B cell (primary cell): ENCODE measurements at regions of chr3 and their contacts with region 1.

Region 1: GRCh38 chr3:172461530-172462138 is 13.4 kb upstream of the GHSR start:
- DNase-seq: peak; percentile 46
- ATAC-seq: no peak
- H3K4me3 ChIP-seq: no peak overlapping the region
- H3K4me3 Mint-ChIP-seq: no peak overlapping the region
- H3K27ac ChIP-seq: no peak overlapping the region
- H3K27ac Mint-ChIP-seq: no peak overlapping the region
- H3K4me1 ChIP-seq: no peaks in the 10 kb centered on the region
- H3K4me1 Mint-ChIP-seq: no peaks in the 10 kb centered on the region
- H3K27me3 ChIP-seq: peaks cover 0 to 5% (median 0%) of the 10 kb centered on the region in 4 experiments
- H3K27me3 Mint-ChIP-seq: peaks cover 12% of the 10 kb centered on the region
- CTCF ChIP-seq: peak; percentile 100

Region 2: GRCh38 chr3:172397716-172398405 is 63.8 kb before region 1 on chr3:
- CTCF ChIA-PET with region 1: no interaction called
- POLR2A ChIA-PET with region 1: no interaction called
- intact Hi-C with region 1: no loop called
- DNase-seq: no peak
- ATAC-seq: no peak
- H3K4me3 ChIP-seq: no peak overlapping the region
- H3K4me3 Mint-ChIP-seq: no peak overlapping the region
- H3K27ac ChIP-seq: no peak overlapping the region
- H3K27ac Mint-ChIP-seq: no peak overlapping the region
- H3K4me1 ChIP-seq: no peaks in the 10 kb centered on the region
- H3K4me1 Mint-ChIP-seq: no peaks in the 10 kb centered on the region
- H3K27me3 ChIP-seq: no peaks in the 10 kb centered on the region
- H3K27me3 Mint-ChIP-seq: peaks cover 4% of the 10 kb centered on the region
- CTCF ChIP-seq: no peak

Region 3: GRCh38 chr3:172449466-172450149 is 12.0 kb before region 1 on chr3:
- CTCF ChIA-PET with region 1: interaction called, 18 read pairs
- POLR2A ChIA-PET with region 1: no interaction called
- intact Hi-C with region 1: no loop called
- DNase-seq: no peak
- ATAC-seq: no peak
- H3K4me3 ChIP-seq: no peak overlapping the region
- H3K4me3 Mint-ChIP-seq: no peak overlapping the region
- H3K27ac ChIP-seq: no peak overlapping the region
- H3K27ac Mint-ChIP-seq: no peak overlapping the region
- H3K4me1 ChIP-seq: peaks cover 7 to 28% of the 10 kb centered on the region in 2 donors
- H3K4me1 Mint-ChIP-seq: peaks cover 20% of the 10 kb centered on the region
- H3K27me3 ChIP-seq: peaks cover 0 to 41% (median 31%) of the 10 kb centered on the region in 4 experiments
- H3K27me3 Mint-ChIP-seq: peaks cover 58% of the 10 kb centered on the region
- CTCF ChIP-seq: no peak

Region 4: DNA sequence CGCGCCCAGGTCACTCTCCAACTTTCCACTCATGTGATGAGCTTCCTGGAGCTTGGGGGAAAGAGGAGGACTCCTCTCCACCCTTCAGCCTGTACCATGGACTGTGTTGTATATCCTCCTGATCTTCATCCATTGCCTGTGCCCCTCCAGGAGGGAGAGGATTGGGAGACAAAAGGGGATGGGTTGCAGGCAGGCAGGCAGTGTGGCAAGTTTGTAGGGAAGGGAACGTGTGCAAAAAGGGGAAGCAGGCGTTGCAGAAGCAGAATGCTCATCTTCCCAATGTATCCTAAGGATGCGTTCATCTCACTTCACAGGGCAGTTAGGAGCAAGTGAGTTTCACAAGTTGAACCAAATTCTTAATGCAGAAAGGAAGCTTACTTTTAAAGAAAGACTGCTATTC is 14.7 kb after region 1 on chr3:
- CTCF ChIA-PET with region 1: interaction called, 15 read pairs
- POLR2A ChIA-PET with region 1: no interaction called
- intact Hi-C with region 1: loop called (anchors 1 kb)
- DNase-seq: no peak
- ATAC-seq: no peak
- H3K4me3 ChIP-seq: no peak overlapping the region
- H3K4me3 Mint-ChIP-seq: peak overlapping the region; percentile 70
- H3K27ac ChIP-seq: no peak overlapping the region
- H3K27ac Mint-ChIP-seq: no peak overlapping the region
- H3K4me1 ChIP-seq: no peaks in the 10 kb centered on the region
- H3K4me1 Mint-ChIP-seq: peaks cover 9% of the 10 kb centered on the region
- H3K27me3 ChIP-seq: no peaks in the 10 kb centered on the region
- H3K27me3 Mint-ChIP-seq: no peaks in the 10 kb centered on the region
- CTCF ChIP-seq: no peak

Region 5: DNA sequence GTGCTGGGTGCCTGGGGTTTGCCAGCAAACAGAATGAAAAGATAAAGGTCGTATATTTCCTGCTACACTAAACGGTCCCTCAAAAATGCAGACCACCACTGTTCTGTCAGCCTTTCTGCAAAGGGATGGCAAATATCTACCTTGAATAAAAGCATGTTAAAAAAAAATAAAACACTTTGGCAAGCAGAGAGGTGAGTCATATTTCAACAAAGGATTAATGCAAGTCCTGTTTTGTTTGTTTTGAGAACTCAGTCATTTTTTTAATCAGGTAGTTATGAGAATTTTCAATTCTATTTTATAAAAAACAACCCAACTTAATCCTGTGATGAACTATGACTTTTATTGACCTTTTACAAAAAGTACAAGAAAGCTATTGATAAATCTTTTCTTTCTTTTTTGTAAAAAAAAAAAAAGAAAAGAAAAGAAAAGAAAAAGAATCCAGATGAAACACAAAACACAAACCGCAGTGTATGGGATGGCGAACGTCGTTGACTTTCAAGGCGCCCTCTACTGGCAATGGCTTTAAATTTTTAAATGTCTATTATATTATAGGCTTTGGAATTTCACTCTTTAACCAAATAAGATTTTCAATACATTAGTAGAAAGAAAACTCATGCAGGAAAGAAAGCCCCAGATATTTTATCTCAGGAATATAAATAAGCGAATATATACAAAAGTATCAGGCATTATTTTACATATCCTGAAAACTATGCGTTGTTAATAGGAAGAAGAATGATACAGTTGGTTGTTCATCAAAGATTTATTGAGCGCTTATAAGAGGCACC is 161.5 kb after region 1 on chr3:
- CTCF ChIA-PET with region 1: interaction called, 9 read pairs
- POLR2A ChIA-PET with region 1: no interaction called
- intact Hi-C with region 1: loop called (anchors 1 kb)
- DNase-seq: peak; percentile 37
- ATAC-seq: no peak
- H3K4me3 ChIP-seq: no peak overlapping the region
- H3K4me3 Mint-ChIP-seq: no peak overlapping the region
- H3K27ac ChIP-seq: no peak overlapping the region
- H3K27ac Mint-ChIP-seq: no peak overlapping the region
- H3K4me1 ChIP-seq: no peaks in the 10 kb centered on the region
- H3K4me1 Mint-ChIP-seq: peaks cover 1% of the 10 kb centered on the region
- H3K27me3 ChIP-seq: no peaks in the 10 kb centered on the region
- H3K27me3 Mint-ChIP-seq: no peaks in the 10 kb centered on the region
- CTCF ChIP-seq: peak; percentile 83

Region 6: GRCh38 chr3:172698631-172699030 is 237.0 kb after region 1 on chr3:
- CTCF ChIA-PET with region 1: no interaction called
- POLR2A ChIA-PET with region 1: no interaction called
- intact Hi-C with region 1: no loop called
- DNase-seq: no peak
- ATAC-seq: no peak
- H3K4me3 ChIP-seq: no peak overlapping the region
- H3K4me3 Mint-ChIP-seq: no peak overlapping the region
- H3K27ac ChIP-seq: no peak overlapping the region
- H3K27ac Mint-ChIP-seq: no peak overlapping the region
- H3K4me1 ChIP-seq: no peaks in the 10 kb centered on the region
- H3K4me1 Mint-ChIP-seq: peaks cover 18% of the 10 kb centered on the region
- H3K27me3 ChIP-seq: no peaks in the 10 kb centered on the region
- H3K27me3 Mint-ChIP-seq: no peaks in the 10 kb centered on the region
- CTCF ChIP-seq: no peak